ENCODE measurements at regions of chr9 and their contacts with region 1.

Region 1: DNA sequence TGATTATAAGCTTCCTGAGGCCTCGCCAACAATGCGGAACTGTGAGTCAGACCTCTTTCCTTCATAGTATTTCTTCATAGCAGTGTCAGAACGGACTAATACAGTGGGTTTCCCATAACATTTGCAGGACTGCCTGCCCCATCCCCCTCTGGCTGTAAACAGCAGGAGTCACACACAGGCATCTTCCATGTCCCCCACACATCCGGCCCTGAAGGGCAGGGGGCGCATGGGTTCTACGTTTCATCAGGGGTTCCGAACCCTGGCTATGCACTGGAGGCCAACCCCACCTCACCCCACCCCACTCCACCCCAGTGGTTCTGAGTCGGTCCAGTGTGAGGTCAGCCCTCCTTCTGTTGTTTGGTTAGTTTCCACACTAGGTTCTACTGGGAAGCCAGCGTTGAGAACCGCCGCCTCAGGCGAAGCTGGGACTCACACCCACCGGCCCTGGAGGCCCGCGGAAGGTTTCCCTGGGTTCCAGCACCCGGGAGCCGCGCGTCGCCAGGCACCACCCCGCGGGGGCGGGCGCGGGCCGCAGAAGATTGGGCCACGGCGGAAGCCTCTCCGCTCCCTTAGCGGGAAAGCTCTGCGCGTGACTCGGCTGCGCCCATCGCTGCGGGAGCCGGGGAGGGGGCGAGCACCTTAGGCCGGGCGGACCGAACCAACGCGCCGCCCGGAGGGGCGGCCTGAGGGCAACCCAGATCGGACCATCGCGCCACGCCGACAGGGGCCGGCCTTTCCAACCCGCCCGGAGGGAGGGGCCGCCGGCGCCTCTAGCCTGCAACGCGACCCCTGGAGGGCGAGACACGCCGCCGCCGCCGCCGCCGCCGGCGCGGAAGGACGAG is at the start of gene RUSC2:
- DNase-seq: peak; percentile 95
- total RNA-seq, gene RUSC2: 53.5 to 64.2 TPM

Region 2: GRCh38 chr9:35436933-35437332 is 52.6 kb before region 1 on chr9:
- intact Hi-C with region 1: no loop called
- DNase-seq: no peak

Region 3: DNA sequence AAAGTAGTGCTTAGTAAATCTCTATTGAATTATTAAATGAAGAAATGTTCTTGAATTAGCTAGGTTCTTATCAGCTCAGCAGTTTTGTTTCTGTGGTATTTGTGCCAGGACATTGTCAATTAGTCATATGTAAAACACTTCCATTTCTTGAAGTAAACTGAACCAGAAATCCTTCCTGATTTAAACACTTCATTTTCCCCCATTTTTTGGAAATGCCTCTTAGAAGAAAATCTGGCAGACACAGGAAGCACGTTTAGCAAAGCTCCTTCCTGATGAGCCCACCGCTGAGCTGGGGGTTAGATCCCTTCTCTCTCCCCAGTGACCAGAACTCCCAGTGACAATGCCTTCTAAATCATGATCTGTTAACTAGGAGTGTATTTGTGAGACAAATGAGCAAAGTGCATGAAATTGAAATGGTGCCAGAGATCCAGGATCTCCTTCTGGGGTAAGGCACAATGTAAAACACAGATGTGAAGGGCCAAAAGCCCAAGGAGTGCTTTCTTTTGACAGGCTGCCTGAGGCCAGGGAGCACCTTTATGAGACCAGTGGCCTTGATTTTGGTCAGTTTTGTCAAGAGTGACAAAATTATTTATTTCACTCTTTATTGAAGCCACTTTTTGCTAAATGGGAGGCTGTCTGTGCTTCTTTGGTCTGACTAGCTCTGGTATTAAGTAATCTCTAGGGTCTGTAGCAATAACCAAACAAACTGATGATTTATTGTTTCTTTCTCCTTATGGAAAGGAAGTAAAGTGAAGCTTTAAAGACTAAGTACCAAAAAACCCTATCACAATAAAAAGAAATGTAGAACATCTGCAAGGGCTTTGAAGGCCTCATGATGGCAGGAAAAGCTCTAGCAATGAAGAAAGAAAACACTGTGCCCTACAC is 25.2 kb before region 1 on chr9:
- intact Hi-C with region 1: loop called in 1 of 2 experiments (anchors 1 kb)
- DNase-seq: no peak

Region 4: GRCh38 chr9:35538361-35539234 is 49.1 kb after region 1 on chr9:
- intact Hi-C with region 1: loop called (anchors 1 to 5 kb)
- DNase-seq: peak; percentile 92

Region 5: GRCh38 chr9:35553670-35554543 is 64.4 kb after region 1 on chr9:
- intact Hi-C with region 1: loop called (anchors 2 to 5 kb)
- DNase-seq: no peak

Region 6: GRCh38 chr9:35559792-35560530 is 70.4 kb after region 1 on chr9:
- intact Hi-C with region 1: loop called (anchors 2 to 5 kb)
- DNase-seq: no peak

Region 7: DNA sequence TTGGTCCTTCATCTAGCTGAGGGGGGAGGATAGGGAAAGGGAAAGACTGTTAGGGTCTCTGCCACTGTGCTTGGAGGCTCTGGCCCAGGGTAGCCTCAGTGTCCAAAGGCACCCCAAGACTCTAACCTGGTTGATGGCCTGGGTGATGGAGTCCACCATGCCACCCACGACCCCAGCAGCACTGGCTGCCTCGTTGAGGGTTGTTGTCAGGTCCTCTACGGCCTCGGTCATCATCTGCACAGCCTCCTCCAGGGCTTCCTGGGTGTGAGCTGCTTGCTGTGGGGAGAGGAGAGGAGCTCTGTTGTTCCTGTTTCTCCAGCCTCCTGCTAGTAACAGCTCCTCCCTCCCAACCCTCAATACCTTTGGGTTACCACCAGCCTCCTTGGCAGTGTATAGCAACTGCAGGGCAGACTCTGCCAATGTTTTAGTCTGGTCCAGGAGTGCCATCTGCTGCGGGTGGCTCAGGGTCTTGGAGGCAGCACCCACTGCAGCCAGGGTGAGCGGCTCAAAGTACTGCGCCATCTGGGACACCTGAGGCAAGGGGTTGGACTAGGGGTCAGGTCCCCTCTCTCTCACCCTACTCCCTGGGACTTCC is 216.4 kb after region 1 on chr9:
- intact Hi-C with region 1: loop called in 1 of 2 experiments (anchors 2 kb)
- DNase-seq: peak; percentile 49

Measured in posterior vena cava (tissue), 2 donors.